Activated CD4-positive, alpha-beta memory T cell treated with anti-CD3 and anti-CD28 coated beads for 36 hours (primary cell): ENCODE measurements at regions of chr6 and their contacts with region 1.

Region 1: DNA sequence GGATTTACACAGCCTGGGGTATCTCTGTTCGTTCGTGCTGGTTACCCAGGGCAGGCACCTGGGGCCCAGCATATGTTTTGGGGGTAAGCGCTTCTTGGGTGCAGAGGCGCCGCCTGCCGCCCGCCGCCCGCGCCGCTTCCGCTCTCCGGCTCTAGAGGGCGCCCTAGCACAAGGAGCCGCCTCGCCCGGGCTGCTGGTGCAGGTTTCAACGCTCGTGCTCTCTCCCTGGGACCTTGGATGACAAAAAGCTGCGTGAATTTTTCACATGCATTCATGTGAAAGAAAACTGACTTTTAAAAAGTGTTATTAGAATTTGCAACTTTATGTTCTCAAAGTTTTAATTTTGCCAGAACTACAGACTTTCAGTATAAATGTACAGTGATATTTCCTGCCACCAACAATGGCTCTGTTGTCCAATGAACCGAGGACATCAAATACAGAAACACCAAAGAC is 32.5 kb downstream of the PRR18 start:
- DNase-seq: peak; percentile 84
- H3K4me3 Mint-ChIP-seq: no peak overlapping the region
- H3K27ac Mint-ChIP-seq: no peak overlapping the region
- H3K4me1 Mint-ChIP-seq: peaks cover 5% of the 10 kb centered on the region
- H3K27me3 Mint-ChIP-seq: no peaks in the 10 kb centered on the region

Region 2: GRCh38 chr6:166313255-166314070 is 37.7 kb after region 1 on chr6:
- CTCF ChIA-PET with region 1: interaction called, 7 read pairs
- POLR2A ChIA-PET with region 1: no interaction called
- intact Hi-C with region 1: loop called (anchors 5 kb)
- DNase-seq: peak; percentile 65
- H3K4me3 Mint-ChIP-seq: no peak overlapping the region
- H3K27ac Mint-ChIP-seq: no peak overlapping the region
- H3K4me1 Mint-ChIP-seq: no peaks in the 10 kb centered on the region
- H3K27me3 Mint-ChIP-seq: peaks cover 18% of the 10 kb centered on the region